ENCODE measurements at regions of chr1 and their contacts with region 1.

Region 1: DNA sequence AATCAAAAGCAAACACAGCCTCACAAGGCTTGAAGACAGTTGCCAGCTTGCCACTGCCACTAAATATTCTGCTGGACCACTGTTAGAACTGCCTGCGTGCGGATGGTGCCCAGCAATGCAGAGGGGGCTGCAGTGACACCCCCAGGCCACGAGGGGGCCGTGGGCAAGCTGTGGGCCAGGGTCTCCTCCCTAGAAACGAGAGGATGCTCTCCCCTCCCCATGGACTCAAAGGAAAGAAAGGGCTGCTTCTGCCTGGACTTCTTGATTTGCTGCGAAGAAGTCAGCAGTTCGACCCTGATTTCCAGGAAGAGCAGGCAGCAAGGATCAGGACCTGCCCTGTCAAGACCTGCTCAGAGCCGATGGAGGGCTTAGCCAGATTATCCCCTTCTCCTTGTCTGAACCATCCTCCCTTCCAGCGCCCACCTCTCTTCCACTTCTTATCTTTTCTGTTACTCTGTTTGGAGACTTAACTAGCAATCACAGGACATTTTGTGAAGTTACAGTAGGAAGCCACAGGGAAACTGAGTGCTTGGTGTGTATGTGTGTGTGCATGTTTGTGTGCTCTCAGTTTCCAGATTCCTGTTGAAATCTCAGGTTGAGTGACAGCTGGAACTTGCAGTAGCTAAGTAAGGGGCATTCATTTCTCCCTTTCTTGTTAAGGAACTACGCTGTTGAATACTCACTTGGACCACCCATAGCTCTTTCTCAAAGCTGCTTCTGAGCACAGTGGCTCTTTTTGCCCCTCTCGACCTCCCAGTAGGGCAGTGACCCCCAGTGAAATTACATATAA is 2.7 kb downstream of the MAN1C1 start:
- DNase-seq: peak in 2 of 3 donors; percentile 53 to 55
- H3K4me3 ChIP-seq: no peak overlapping the region
- H3K27ac ChIP-seq: no peak overlapping the region
- H3K4me1 ChIP-seq: peaks cover 0 to 77% (median 51%) of the 10 kb centered on the region in 4 experiments
- H3K27me3 ChIP-seq: peaks cover 0 to 26% (median 5%) of the 10 kb centered on the region in 5 experiments

Region 2: GRCh38 chr1:25631750-25632485 is 12.6 kb after region 1 on chr1:
- CTCF ChIA-PET with region 1: interaction called, 11 read pairs
- POLR2A ChIA-PET with region 1: no interaction called
- DNase-seq: no peak
- H3K4me3 ChIP-seq: peak overlapping the region in 2 of 7 experiments; percentile 19 to 42
- H3K27ac ChIP-seq: no peak overlapping the region
- H3K4me1 ChIP-seq: peaks cover 0 to 4% (median 0%) of the 10 kb centered on the region in 4 experiments
- H3K27me3 ChIP-seq: no peaks in the 10 kb centered on the region

Region 3: GRCh38 chr1:25642574-25643108 is 23.3 kb after region 1 on chr1:
- CTCF ChIA-PET with region 1: interaction called, 69 read pairs
- POLR2A ChIA-PET with region 1: interaction called, 3 read pairs
- DNase-seq: peak; percentile 96 to 99 (median 98)
- H3K4me3 ChIP-seq: peak overlapping the region in 5 of 7 experiments; percentile 6 to 58 (median 37)
- H3K27ac ChIP-seq: peak overlapping the region in 1 of 2 experiments; percentile 64
- H3K4me1 ChIP-seq: peaks cover 9 to 21% (median 17%) of the 10 kb centered on the region in 4 experiments
- H3K27me3 ChIP-seq: peaks cover 0 to 39% (median 8%) of the 10 kb centered on the region in 5 experiments

Region 4: DNA sequence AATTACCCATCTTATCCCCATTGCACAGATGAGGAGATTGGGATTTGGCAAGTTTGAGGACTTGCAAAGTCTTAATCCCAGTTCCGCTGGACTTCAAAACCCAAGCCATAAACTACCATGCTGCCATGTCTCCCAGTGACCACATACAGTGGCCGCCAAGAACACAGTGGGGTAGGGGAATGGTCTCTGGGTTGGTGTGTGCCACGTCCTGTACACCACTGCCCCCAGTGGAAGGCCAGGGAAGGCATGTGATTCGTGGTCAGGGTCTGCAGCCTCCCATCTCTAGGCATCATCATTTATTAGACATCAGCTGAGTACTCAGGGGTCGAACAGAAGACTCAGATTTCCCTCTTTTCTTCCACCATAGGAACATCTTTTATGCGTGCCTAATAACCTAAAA is 73.3 kb after region 1 on chr1:
- CTCF ChIA-PET with region 1: interaction called, 19 read pairs
- POLR2A ChIA-PET with region 1: no interaction called
- DNase-seq: peak in 2 of 3 donors; percentile 45 to 52
- H3K4me3 ChIP-seq: no peak overlapping the region
- H3K27ac ChIP-seq: no peak overlapping the region
- H3K4me1 ChIP-seq: no peaks in the 10 kb centered on the region
- H3K27me3 ChIP-seq: peaks cover 0 to 2% (median 0%) of the 10 kb centered on the region in 5 experiments

Region 5: DNA sequence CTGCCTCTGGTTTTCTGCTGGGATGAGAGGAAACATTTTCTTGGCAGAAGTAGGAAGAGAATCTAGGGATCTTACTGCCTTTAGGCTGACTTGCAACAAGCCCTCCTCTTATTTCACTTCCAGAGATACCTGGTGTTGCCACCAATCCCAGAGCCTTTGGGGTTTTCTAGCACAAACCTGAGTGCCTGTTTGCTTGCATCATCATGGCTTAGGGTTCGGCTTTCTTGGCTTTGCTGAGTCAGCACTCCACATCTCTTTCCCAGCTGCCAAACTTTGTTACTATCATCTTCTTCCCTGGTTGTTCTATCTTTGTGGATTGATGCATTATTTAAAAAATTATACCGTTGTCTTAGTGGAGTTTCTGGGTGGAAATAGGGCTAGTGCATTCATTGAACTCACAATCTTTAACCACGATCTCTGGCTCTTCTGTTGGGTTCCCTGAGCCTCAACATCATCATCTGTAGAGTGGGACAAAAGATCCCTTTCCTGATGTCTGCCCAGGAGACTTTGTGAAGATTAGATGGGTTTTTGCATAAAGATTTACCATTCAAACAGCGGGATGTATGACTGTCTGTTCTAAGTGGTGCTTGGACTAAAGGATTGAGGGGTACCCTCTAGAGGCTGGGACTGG is 104.1 kb after region 1 on chr1:
- CTCF ChIA-PET with region 1: no interaction called
- POLR2A ChIA-PET with region 1: no interaction called
- DNase-seq: no peak
- H3K4me3 ChIP-seq: no peak overlapping the region
- H3K27ac ChIP-seq: no peak overlapping the region
- H3K4me1 ChIP-seq: peaks cover 0 to 4% (median 0%) of the 10 kb centered on the region in 4 experiments
- H3K27me3 ChIP-seq: no peaks in the 10 kb centered on the region

Measured in common myeloid progenitor, CD34-positive (primary cell).